Spleen (tissue), 13 donors: ENCODE measurements at regions of chr12 and their contacts with region 1.

Region 1: DNA sequence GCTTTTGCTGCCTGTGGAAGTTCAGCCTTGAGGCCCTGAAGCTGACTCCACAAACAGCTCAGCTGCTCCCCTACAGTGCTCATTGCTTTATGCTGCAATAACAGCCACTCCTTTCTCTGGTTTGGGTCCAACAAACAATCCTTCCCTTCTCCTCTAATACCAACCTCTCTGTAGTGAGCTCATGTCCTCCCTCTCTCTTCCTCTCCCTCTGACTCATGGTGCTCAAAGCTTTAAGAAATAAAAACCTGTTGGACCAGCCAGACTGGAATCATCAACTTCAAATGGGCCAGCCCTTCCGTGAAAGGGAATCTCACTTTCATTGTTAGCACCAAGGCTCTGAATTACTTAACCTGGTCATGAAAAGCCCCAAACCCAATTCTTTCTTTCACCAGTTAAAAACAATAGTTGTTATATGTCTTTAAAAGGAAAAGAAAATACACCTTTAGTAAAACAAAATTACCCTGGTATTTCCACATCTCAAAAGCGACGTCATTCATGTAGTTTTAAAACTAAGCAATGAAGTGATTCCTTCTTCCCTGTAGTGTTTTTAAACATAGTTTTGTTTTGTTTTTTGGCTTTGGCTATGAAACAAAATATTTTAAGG is 126.4 kb downstream of the DUSP6 start:
- DNase-seq: no peak
- H3K4me3 ChIP-seq: no peak overlapping the region
- H3K27ac ChIP-seq: peak overlapping the region in 7 of 8 donors; percentile 11 to 63 (median 44)
- H3K4me1 ChIP-seq: peaks cover 0 to 35% (median 15%) of the 10 kb centered on the region in 6 donors
- H3K27me3 ChIP-seq: no peaks in the 10 kb centered on the region
- CTCF ChIP-seq: no peak
- POLR2A ChIP-seq: no peak

Region 2: GRCh38 chr12:89162704-89163261 is 63.1 kb before region 1 on chr12:
- intact Hi-C with region 1: loop called (anchors 10 kb)
- DNase-seq: no peak
- H3K4me3 ChIP-seq: peak overlapping the region in 1 of 8 donors; percentile 50
- H3K27ac ChIP-seq: peak overlapping the region; percentile 36 to 92 (median 89)
- H3K4me1 ChIP-seq: peaks cover 38 to 95% (median 79%) of the 10 kb centered on the region in 6 donors
- H3K27me3 ChIP-seq: no peaks in the 10 kb centered on the region
- CTCF ChIP-seq: no peak
- POLR2A ChIP-seq: no peak

Region 3: GRCh38 chr12:89345830-89346740 is 120.2 kb after region 1 on chr12:
- intact Hi-C with region 1: loop called (anchors 5 kb)
- DNase-seq: peak; percentile 88
- H3K4me3 ChIP-seq: peak overlapping the region in 7 of 8 donors; percentile 0 to 85 (median 79)
- H3K27ac ChIP-seq: peak overlapping the region; percentile 59 to 100 (median 98)
- H3K4me1 ChIP-seq: peaks cover 48 to 78% (median 67%) of the 10 kb centered on the region in 6 donors
- H3K27me3 ChIP-seq: no peaks in the 10 kb centered on the region
- CTCF ChIP-seq: peak in 5 of 11 experiments; percentile 3 to 20 (median 19)
- POLR2A ChIP-seq: no peak

Region 4: DNA sequence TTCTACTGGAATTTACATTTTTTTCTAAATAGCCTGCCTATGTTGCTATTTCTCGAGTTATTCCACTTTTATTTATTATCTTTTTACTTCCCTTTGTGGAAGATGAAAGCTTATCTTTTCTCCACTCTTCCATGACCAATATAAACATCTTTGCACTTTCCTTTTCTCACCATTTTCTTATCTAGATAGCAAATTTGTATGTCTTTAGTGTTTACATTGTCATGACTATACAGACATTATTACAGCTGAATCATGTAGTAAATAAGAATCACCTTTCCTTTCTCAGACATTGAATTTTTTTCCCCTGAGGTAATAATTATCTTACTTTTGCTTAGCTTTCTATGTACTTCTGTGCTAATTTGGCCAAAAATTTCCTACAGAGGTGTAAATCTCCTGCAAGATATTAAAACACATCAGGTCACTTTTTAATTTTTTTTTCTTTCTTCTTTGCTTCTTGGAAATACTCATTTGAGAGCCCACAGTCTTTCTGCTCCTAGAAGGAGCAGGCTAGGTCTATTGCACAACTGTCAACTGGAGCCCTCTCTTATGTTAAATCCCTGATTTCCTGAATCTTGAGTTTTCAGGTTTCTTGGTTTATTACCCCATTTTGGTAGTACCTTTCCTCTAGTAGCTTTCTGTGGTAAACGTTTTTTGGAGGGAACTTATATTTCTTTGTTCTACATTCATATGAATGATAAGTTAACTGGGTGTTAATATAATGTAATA is 591.8 kb after region 1 on chr12:
- intact Hi-C with region 1: no loop called
- DNase-seq: no peak
- H3K4me3 ChIP-seq: no peak overlapping the region
- H3K27ac ChIP-seq: no peak overlapping the region
- H3K4me1 ChIP-seq: peaks cover 0 to 9% (median 0%) of the 10 kb centered on the region in 6 donors
- H3K27me3 ChIP-seq: no peaks in the 10 kb centered on the region
- CTCF ChIP-seq: no peak
- POLR2A ChIP-seq: no peak